CD4-positive, alpha-beta memory T cell (primary cell): ENCODE measurements at regions of chr15 and their contacts with region 1.

Region 1: GRCh38 chr15:25933456-25934158 is 70.5 kb upstream of the ATP10A start:
- DNase-seq: peak; percentile 58 to 69 (median 63)
- H3K4me3 ChIP-seq: peak overlapping the region in 1 of 2 donors; percentile 50
- H3K4me3 Mint-ChIP-seq: peak overlapping the region; percentile 85 to 96 (median 90)
- H3K27ac ChIP-seq: no peak overlapping the region
- H3K27ac Mint-ChIP-seq: peak overlapping the region in 5 of 7 donors; percentile 64 to 79 (median 72)
- H3K4me1 ChIP-seq: peaks cover 8% of the 10 kb centered on the region
- H3K4me1 Mint-ChIP-seq: peaks cover 2 to 6% (median 4%) of the 10 kb centered on the region in 4 donors
- H3K27me3 ChIP-seq: no peaks in the 10 kb centered on the region
- H3K27me3 Mint-ChIP-seq: peaks cover 3 to 6% of the 10 kb centered on the region in 2 donors

Region 2: DNA sequence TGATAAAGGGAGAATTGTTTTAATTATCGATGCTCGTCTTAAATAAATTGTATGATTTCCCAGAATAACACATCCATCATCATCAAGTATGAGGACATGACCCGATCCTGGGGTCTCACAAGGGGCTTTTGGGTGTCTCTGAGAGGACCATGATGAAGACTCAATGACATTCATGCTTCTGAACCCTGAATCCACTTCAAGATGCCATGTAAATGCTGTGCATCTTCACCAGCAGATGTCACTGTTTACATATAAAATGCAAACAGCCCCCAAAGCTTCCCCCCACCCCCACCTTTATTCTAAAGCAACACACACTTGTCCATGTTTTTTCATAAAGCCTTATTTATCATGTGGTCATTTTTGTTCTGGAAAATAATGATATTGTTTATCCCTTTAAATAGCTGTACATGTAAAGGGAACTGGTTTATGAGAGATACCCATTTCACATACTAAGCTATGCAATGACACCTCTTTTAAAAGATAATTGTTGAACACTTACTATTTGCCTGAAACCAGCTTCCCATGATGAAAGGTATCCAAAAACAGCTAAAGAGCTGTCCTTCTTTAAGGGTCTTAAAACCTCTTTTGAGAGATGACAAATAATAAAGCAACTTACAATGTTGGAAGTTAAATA is 425.1 kb before region 1 on chr15:
- CTCF ChIA-PET with region 1: interaction called, 19 read pairs
- POLR2A ChIA-PET with region 1: no interaction called
- intact Hi-C with region 1: loop called (anchors 1 kb)
- DNase-seq: peak in 2 of 5 donors; percentile 4
- H3K4me3 ChIP-seq: no peak overlapping the region
- H3K4me3 Mint-ChIP-seq: no peak overlapping the region
- H3K27ac ChIP-seq: no peak overlapping the region
- H3K27ac Mint-ChIP-seq: no peak overlapping the region
- H3K4me1 ChIP-seq: no peaks in the 10 kb centered on the region
- H3K4me1 Mint-ChIP-seq: no peaks in the 10 kb centered on the region
- H3K27me3 ChIP-seq: no peaks in the 10 kb centered on the region
- H3K27me3 Mint-ChIP-seq: peaks cover 2 to 9% of the 10 kb centered on the region in 2 donors

Region 3: GRCh38 chr15:25710184-25710583 is 223.4 kb before region 1 on chr15:
- CTCF ChIA-PET with region 1: interaction called, 14 read pairs
- POLR2A ChIA-PET with region 1: no interaction called
- intact Hi-C with region 1: no loop called
- DNase-seq: peak in 4 of 5 donors; percentile 23 to 29 (median 26)
- H3K4me3 ChIP-seq: no peak overlapping the region
- H3K4me3 Mint-ChIP-seq: no peak overlapping the region
- H3K27ac ChIP-seq: no peak overlapping the region
- H3K27ac Mint-ChIP-seq: no peak overlapping the region
- H3K4me1 ChIP-seq: no peaks in the 10 kb centered on the region
- H3K4me1 Mint-ChIP-seq: peaks cover 0 to 1% (median 0%) of the 10 kb centered on the region in 4 donors
- H3K27me3 ChIP-seq: no peaks in the 10 kb centered on the region
- H3K27me3 Mint-ChIP-seq: no peaks in the 10 kb centered on the region

Region 4: DNA sequence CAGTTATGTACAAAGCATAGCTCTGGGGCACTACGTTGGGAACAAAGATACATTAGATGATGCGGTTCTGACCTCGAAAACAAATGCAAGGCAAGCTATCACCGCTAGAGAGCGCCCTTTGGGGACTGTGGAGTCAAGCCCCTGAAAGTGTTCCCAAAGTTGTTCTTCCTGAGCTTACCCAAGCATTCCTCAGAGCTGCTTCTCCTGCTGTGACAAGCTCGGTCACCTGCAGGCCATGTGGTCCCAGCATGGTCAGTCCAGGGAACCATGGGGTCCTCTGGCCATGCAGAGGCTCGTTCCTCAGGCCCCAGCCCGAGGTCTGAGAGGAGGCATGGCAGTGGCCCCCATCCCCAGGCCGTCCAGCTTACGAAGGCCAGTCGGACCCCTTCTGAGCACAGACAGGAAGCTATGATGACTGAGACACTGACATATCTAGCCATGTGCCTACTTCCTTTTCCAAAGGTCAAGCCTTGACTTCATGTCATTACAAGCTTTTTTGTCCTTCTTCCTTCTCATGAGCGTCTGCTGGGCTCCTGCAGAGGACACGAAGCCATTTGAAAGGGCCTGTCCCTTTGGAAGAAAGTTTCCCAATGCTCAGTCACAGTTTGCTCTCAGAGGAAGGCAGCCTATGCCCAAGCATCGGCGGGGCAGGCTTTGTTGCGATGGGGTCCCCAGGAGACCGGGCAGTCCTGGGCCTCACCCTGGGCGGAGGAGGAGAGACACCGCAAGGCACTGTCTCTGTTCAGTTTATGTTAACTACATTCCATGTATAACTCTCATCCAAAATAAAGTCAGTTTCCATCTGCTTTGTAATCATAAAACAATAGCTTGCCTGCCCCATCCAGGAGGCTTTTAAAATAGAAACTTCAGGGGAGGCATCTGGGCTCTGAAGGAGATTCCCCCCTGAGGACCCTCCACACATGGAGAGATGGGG is 149.7 kb before region 1 on chr15:
- CTCF ChIA-PET with region 1: interaction called, 47 read pairs
- POLR2A ChIA-PET with region 1: no interaction called
- intact Hi-C with region 1: no loop called
- DNase-seq: peak in 4 of 5 donors; percentile 17 to 29 (median 25)
- H3K4me3 ChIP-seq: no peak overlapping the region
- H3K4me3 Mint-ChIP-seq: no peak overlapping the region
- H3K27ac ChIP-seq: no peak overlapping the region
- H3K27ac Mint-ChIP-seq: peak overlapping the region in 4 of 7 donors; percentile 30 to 64 (median 44)
- H3K4me1 ChIP-seq: no peaks in the 10 kb centered on the region
- H3K4me1 Mint-ChIP-seq: peaks cover 8 to 28% (median 25%) of the 10 kb centered on the region in 4 donors
- H3K27me3 ChIP-seq: no peaks in the 10 kb centered on the region
- H3K27me3 Mint-ChIP-seq: no peaks in the 10 kb centered on the region